Activated B cell treated with CpG ODN at 0.5 μM for 24 hours (primary cell): ENCODE measurements at regions of chr10 and their contacts with region 1.

Region 1: GRCh38 chr10:71771821-71772617 is 1.3 kb downstream of the VSIR start:
- DNase-seq: no peak
- ATAC-seq: no peak
- H3K4me3 Mint-ChIP-seq: peak overlapping the region; percentile 88
- H3K27ac Mint-ChIP-seq: peak overlapping the region; percentile 87
- H3K4me1 Mint-ChIP-seq: peaks cover 95% of the 10 kb centered on the region
- H3K27me3 Mint-ChIP-seq: no peaks in the 10 kb centered on the region
- CTCF ChIP-seq: no peak

Region 2: DNA sequence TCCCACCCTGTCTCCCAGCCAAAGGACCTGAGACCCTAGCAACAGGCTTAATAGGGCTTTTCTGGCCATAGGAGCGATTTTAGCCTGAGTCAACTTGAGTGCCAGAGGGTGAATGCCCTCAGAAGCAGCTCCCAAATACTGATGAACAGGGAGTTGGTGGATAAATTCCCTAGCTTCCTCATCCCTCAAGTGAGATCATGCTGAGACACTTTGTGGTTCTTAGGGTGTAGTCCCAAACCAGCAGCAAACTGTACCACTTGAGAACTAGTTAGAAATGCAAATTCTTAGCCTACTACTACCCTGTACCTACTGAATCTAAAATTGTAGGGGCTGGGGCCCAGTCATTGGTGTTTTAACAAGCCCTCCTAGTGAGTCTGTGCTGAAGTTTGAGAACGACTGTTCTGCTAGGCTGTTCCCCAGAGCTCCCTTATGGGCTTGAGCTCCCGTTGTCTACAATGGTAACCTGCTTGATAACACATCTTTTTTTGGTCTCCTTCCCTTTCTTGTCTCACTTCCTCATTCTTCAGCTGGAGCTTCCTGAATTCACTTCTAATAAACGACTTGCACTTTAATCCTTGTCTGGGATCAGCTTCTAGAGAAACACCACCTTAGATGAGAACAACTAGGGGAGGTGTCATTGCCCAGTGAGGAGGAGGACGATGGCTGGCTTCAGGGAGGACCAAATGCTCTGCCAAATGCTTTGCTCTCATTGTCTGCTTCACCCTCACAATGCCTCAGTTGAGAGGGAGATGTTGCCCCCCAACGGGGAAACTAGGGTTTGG is 393.5 kb before region 1 on chr10:
- CTCF ChIA-PET with region 1: no interaction called
- POLR2A ChIA-PET with region 1: interaction called, 3 read pairs
- intact Hi-C with region 1: loop called (anchors 2 kb)
- DNase-seq: no peak
- ATAC-seq: peak; percentile 20
- H3K4me3 Mint-ChIP-seq: peak overlapping the region; percentile 24
- H3K27ac Mint-ChIP-seq: peak overlapping the region; percentile 67
- H3K4me1 Mint-ChIP-seq: peaks cover 40% of the 10 kb centered on the region
- H3K27me3 Mint-ChIP-seq: no peaks in the 10 kb centered on the region
- CTCF ChIP-seq: no peak

Region 3: DNA sequence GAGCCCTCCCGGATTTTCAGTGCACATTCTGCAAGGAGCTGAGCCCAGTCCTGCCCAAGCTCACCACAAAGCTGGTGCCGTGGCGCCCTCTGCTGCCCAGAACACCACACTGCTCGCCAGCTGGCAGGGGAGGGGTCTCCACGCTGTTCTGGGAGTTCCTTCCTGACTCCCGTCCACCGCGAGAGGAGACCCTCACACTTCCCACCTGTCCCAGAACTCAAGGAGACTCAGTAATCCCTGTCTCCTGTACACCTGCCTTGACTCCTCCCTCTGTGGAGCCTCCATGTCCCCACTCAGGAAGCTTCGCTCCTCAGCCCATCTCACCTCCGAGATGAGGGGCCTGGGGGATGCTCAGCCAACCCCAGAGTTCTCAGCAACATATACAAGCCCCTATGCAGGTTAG is 63.7 kb before region 1 on chr10:
- CTCF ChIA-PET with region 1: interaction called, 17 read pairs
- POLR2A ChIA-PET with region 1: interaction called, 8 read pairs
- intact Hi-C with region 1: loop called (anchors 5 kb)
- DNase-seq: peak; percentile 71
- ATAC-seq: peak; percentile 84
- H3K4me3 Mint-ChIP-seq: no peak overlapping the region
- H3K27ac Mint-ChIP-seq: no peak overlapping the region
- H3K4me1 Mint-ChIP-seq: peaks cover 22% of the 10 kb centered on the region
- H3K27me3 Mint-ChIP-seq: no peaks in the 10 kb centered on the region
- CTCF ChIP-seq: peak; percentile 33

Region 4: GRCh38 chr10:71727738-71728737 is 44.0 kb before region 1 on chr10:
- CTCF ChIA-PET with region 1: interaction called, 26 read pairs
- POLR2A ChIA-PET with region 1: interaction called, 79 read pairs
- intact Hi-C with region 1: loop called (anchors 1 kb)
- DNase-seq: no peak
- ATAC-seq: peak; percentile 64
- H3K4me3 Mint-ChIP-seq: peak overlapping the region; percentile 64
- H3K27ac Mint-ChIP-seq: peak overlapping the region; percentile 91
- H3K4me1 Mint-ChIP-seq: peaks cover 54% of the 10 kb centered on the region
- H3K27me3 Mint-ChIP-seq: no peaks in the 10 kb centered on the region
- CTCF ChIP-seq: no peak

Region 5: GRCh38 chr10:71790749-71791552 is 18.9 kb after region 1 on chr10:
- CTCF ChIA-PET with region 1: interaction called, 4 read pairs
- POLR2A ChIA-PET with region 1: interaction called, 3 read pairs
- intact Hi-C with region 1: loop called (anchors 2 kb)
- DNase-seq: no peak
- ATAC-seq: peak; percentile 90
- H3K4me3 Mint-ChIP-seq: peak overlapping the region; percentile 50
- H3K27ac Mint-ChIP-seq: peak overlapping the region; percentile 53
- H3K4me1 Mint-ChIP-seq: peaks cover 19% of the 10 kb centered on the region
- H3K27me3 Mint-ChIP-seq: no peaks in the 10 kb centered on the region
- CTCF ChIP-seq: no peak

Region 6: DNA sequence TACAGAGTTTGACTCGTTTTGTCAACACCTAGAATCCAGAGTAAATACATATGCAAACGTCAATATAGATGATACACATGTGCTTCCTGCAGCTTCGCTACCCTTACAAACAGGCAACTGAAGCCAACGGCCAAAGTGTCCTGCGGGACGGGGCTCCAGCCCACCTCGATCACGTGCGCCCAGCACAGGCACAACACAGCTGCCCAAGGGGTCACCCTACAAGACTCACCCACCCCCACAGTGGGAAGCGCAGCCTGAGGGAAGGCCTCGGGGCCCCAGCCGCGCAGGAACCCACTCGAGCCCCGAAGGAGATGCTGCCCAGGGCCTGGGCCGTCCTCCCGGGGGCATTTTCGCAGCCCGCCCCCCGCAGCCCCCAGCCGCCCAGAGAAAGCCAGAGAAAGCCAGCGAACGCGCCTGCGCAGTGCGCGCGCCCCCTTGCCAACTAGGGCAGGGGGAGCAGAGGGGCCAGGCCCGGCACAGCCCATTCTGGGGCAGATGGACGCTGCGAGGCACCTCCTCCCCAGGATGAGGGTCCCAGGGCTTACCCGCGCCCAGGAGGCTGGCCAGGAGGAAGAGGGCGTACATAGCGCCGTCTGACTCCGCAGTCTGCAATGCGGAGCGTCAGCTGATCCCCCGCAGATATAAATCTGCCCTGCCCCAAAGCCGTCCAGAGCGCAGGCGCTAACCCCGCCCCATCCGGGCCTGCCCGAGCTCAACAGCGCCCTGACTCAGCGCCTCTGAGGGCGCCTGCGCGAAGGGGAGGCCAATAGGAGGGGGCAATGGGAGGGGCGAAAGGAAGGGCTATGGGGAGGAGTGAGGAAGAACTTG is 78.8 kb after region 1 on chr10 and contains the start of gene PSAP:
- CTCF ChIA-PET with region 1: interaction called, 3 read pairs
- POLR2A ChIA-PET with region 1: interaction called, 17 read pairs
- intact Hi-C with region 1: loop called (anchors 2 kb)
- DNase-seq: peak; percentile 96
- ATAC-seq: peak; percentile 97
- H3K4me3 Mint-ChIP-seq: peak within 1 kb of the TSS; percentile 92
- H3K27ac Mint-ChIP-seq: peak within 1 kb of the TSS; percentile 83
- H3K4me1 Mint-ChIP-seq: peaks cover 63% of the 10 kb centered on the region
- H3K27me3 Mint-ChIP-seq: no peaks in the 10 kb centered on the region
- CTCF ChIP-seq: no peak
- total RNA-seq, gene PSAP: 207 and 210 TPM in 2 replicates

Region 7: DNA sequence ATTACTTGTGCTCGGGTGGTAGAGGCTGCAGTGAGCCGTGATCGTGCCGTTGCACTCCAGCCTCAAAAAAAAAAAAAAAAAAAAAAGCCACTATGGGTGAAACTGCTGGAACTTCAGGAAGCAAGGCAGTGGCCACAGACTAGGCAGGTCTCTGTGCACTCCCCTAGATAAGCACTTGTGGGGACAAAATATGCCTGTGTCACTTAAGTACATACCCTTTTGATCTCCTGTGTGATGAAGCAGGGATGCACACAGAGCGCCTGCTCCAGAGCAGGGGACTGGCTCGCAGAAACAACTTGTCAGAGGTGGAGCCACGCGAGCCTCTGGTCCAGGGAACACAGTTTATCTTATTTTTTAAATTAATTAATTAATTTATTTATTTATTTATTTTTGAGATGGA is 121.9 kb after region 1 on chr10:
- CTCF ChIA-PET with region 1: interaction called, 17 read pairs
- POLR2A ChIA-PET with region 1: interaction called, 4 read pairs
- intact Hi-C with region 1: loop called (anchors 1 kb)
- DNase-seq: no peak
- ATAC-seq: no peak
- H3K4me3 Mint-ChIP-seq: no peak overlapping the region
- H3K27ac Mint-ChIP-seq: no peak overlapping the region
- H3K4me1 Mint-ChIP-seq: peaks cover 20% of the 10 kb centered on the region
- H3K27me3 Mint-ChIP-seq: peaks cover 2% of the 10 kb centered on the region
- CTCF ChIP-seq: no peak